Spleen (tissue), 13 donors: ENCODE measurements at regions of chr18 and their contacts with region 1.

Region 1: GRCh38 chr18:31555971-31556747 is 35.5 kb upstream of the TTR start:
- DNase-seq: no peak
- H3K4me3 ChIP-seq: no peak overlapping the region
- H3K27ac ChIP-seq: no peak overlapping the region
- H3K4me1 ChIP-seq: no peaks in the 10 kb centered on the region
- H3K27me3 ChIP-seq: peaks cover 0 to 8% (median 0%) of the 10 kb centered on the region in 7 donors
- CTCF ChIP-seq: peak; percentile 73 to 90 (median 84)
- POLR2A ChIP-seq: no peak

Region 2: DNA sequence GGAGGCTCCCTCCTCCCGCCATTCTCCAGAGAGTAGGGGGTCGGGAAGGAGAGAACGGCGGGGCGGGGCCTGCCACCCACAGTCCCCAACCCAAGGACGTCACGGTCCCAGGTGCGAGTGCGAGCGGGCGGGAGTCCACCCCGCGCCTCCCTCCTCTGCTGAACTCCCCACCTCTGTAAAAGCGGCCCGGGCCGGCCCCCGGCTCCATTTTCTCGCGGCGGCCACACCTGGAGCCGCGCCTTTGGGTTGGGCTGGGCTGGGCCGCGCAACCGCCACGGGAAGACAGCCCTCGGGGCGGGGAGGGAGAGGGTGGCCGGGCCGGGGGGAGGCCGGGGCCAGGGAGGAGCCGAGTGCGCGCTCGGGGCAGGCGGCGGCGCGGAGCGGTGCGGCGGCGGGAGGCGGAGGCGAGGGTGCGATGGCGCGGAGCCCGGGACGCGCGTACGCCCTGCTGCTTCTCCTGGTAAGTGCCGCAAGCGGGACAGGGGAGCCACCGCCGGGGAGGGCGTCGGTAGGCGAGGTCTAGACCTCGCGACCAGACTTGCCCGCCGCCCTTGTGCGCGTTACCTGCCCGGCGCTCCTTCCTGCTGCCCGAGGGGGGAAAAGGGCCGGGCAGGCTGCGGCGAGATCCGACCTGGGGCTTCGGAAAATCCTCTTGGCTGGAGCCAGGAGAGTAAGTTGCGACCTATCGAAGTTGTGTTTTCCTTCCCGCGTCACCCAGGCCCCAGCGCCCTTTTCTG is 58.2 kb before region 1 on chr18 and contains the start of gene DSG2:
- intact Hi-C with region 1: no loop called
- DNase-seq: peak; percentile 75
- H3K4me3 ChIP-seq: peak within 1 kb of the TSS; percentile 30 to 72 (median 41)
- H3K27ac ChIP-seq: no peak within 1 kb of the TSS
- H3K4me1 ChIP-seq: peaks cover 0 to 18% (median 13%) of the 10 kb centered on the region in 6 donors
- H3K27me3 ChIP-seq: peaks cover 6 to 73% (median 29%) of the 10 kb centered on the region in 7 donors
- CTCF ChIP-seq: no peak
- POLR2A ChIP-seq: no peak
- total RNA-seq, gene DSG2: 0.09 to 0.79 (median 0.19) TPM in 6 of 7 donors, not detected in the other

Region 3: GRCh38 chr18:31722369-31722957 is 166.3 kb after region 1 on chr18:
- intact Hi-C with region 1: loop called (anchors 2 kb)
- DNase-seq: peak; percentile 79
- H3K4me3 ChIP-seq: no peak overlapping the region
- H3K27ac ChIP-seq: no peak overlapping the region
- H3K4me1 ChIP-seq: peaks cover 0 to 14% (median 6%) of the 10 kb centered on the region in 6 donors
- H3K27me3 ChIP-seq: peaks cover 0 to 42% (median 12%) of the 10 kb centered on the region in 7 donors
- CTCF ChIP-seq: peak; percentile 38 to 93 (median 76)
- POLR2A ChIP-seq: no peak

Region 4: DNA sequence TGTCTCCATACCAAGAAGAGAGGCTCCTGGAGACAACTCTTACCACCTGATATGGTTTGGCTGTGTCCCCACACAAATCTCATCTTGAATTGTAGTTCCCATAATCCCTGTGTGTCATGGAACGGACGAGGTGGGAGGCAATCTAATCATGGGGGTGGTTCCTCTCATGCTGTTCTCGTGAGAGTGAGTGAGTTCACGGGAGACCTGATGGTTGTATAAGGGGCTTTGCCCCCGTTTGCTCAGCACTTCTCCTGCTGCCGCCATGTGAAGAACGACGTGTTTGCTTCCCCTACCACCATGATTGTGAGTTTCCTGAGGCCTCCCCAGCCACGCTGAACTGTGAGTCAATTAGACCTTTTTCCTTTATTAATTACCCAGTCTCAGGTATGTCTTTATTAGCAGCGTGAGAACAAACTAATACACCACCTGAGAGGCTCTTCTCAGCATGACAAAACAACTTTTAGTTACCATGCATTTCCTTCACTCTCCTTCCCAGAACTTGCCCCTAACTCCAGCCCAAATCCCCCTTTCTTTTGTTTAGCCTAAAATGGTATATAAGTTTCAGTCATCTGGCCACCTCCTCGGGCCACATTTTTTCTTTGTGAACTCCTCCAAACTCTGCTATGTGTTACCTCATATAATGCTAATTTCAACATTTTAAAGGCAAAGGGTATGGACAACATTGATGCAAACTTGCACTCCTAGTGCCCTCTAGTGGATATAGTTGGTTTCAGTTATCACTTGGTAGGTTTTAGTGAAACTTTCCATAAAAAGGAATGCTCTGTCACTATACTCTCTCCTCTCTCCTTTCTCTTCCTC is 263.2 kb after region 1 on chr18:
- intact Hi-C with region 1: loop called (anchors 5 kb)
- DNase-seq: no peak
- H3K4me3 ChIP-seq: no peak overlapping the region
- H3K27ac ChIP-seq: no peak overlapping the region
- H3K4me1 ChIP-seq: peaks cover 0 to 12% (median 0%) of the 10 kb centered on the region in 6 donors
- H3K27me3 ChIP-seq: no peaks in the 10 kb centered on the region
- CTCF ChIP-seq: peak in 10 of 11 experiments; percentile 10 to 70 (median 60)
- POLR2A ChIP-seq: no peak

Region 5: GRCh38 chr18:31977270-31977872 is 421.2 kb after region 1 on chr18:
- intact Hi-C with region 1: loop called (anchors 10 kb)
- DNase-seq: no peak
- H3K4me3 ChIP-seq: no peak overlapping the region
- H3K27ac ChIP-seq: no peak overlapping the region
- H3K4me1 ChIP-seq: no peaks in the 10 kb centered on the region
- H3K27me3 ChIP-seq: no peaks in the 10 kb centered on the region
- CTCF ChIP-seq: peak in 10 of 11 experiments; percentile 26 to 66 (median 56)
- POLR2A ChIP-seq: no peak